ENCODE measurements at regions of chr4 and their contacts with region 1.

Region 1: DNA sequence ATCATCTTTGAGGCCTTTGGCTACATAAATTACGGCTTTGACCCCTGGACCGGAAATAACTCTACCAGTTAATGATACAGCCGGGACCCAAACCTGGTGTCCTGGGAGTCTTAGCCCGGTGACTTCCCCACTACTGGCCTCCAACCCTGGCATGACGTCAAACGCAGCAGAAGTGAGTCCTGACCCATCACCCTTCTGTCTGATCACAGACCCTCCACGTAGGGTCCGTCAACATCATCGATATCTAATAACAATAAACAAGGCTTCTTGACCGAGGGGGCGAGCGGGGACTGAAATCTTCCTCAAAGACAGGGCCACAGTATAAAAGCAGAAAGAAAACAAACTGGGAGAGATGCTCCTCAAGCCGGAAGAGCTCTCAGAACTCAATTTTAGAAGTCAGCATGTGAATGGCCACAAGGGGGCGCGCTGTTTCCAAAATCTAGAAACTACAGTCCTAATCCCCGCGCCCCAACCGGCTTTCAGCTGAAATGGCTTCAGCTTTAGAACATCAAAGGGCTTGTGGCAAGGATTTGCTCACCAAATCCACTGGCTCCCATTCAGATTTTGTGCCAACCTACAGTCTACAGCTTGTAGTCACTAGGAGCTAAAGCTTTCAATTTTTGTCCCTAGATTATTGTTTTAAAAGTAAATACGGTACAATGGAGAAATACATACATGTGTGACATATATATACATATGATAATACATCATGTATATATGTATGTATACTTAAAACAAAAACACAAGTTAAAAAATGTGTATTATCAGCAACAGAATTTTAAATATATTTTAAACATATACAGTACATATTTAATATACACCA is 46.4 kb upstream of the ENPP6 start:
- DNase-seq: peak; percentile 85
- H3K4me3 ChIP-seq: no peak overlapping the region
- H3K27ac ChIP-seq: no peak overlapping the region
- H3K4me1 ChIP-seq: peaks cover 23% of the 10 kb centered on the region
- H3K27me3 ChIP-seq: peaks cover 2 to 3% of the 10 kb centered on the region in 2 experiments
- CTCF ChIP-seq: peak; percentile 77 to 85
- POLR2A ChIP-seq: no peak

Region 2: DNA sequence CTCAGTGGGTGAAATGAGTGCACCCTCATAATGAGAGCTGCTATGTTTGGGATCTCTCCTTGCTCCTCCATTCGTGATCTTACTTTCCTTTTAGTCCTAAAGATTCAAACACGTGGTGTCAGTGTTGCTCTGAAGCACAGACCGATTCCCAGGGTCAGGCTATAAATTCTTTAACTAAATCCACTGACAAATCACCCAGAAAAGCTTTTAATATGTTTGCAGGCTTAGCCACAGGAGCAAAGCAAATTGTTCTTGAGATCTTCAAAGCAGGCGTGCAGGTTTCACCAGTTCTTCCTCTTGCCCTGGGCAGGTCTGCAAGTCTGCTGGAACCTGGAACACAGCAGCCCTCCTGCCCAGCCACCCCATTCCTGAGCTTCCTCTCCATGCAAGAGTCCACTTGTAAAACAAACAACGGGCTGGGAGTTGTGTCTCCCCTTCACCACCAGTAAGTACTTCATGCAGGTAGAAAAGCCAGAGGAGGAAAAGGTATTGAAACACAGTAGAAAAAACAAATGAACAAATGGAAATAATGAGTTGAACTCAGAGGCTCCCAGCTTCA is 23.7 kb after region 1 on chr4:
- CTCF ChIA-PET with region 1: interaction called, 33 read pairs
- POLR2A ChIA-PET with region 1: no interaction called
- dilution Hi-C with region 1: no loop called
- intact Hi-C with region 1: no loop called
- DNase-seq: peak; percentile 55
- H3K4me3 ChIP-seq: no peak overlapping the region
- H3K27ac ChIP-seq: no peak overlapping the region
- H3K4me1 ChIP-seq: no peaks in the 10 kb centered on the region
- H3K27me3 ChIP-seq: no peaks in the 10 kb centered on the region
- CTCF ChIP-seq: no peak
- POLR2A ChIP-seq: no peak

Region 3: GRCh38 chr4:184408021-184408710 is 144.0 kb after region 1 on chr4:
- CTCF ChIA-PET with region 1: interaction called, 11 read pairs
- POLR2A ChIA-PET with region 1: interaction called, 3 read pairs
- dilution Hi-C with region 1: no loop called
- intact Hi-C with region 1: loop called (anchors 2 kb)
- DNase-seq: peak; percentile 21
- H3K4me3 ChIP-seq: no peak overlapping the region
- H3K27ac ChIP-seq: peak overlapping the region; percentile 6
- H3K4me1 ChIP-seq: peaks cover 25% of the 10 kb centered on the region
- H3K27me3 ChIP-seq: no peaks in the 10 kb centered on the region
- CTCF ChIP-seq: no peak
- POLR2A ChIP-seq: no peak

Region 4: DNA sequence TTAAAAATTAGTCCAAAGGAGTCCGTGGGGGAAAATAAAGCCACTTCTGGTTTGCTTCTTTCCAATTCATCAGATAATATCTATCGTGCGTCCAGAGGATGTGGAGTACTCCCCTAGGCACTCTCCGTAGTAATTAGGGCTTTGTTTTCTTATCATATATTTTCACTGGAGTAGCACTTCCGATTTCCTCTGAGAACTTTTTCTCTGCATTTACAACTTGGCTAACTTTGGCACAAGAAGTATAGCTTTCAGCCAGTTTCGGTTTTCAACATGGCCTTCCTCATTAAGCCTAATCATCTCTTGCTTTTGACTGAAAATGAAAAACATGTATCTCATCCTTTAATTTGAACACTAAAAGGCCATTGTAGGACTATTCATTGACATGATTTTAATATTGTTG is 304.6 kb after region 1 on chr4:
- CTCF ChIA-PET with region 1: interaction called, 10 read pairs
- POLR2A ChIA-PET with region 1: no interaction called
- dilution Hi-C with region 1: no loop called
- intact Hi-C with region 1: no loop called
- DNase-seq: peak; percentile 84
- H3K4me3 ChIP-seq: peak overlapping the region in 1 of 3 experiments; percentile 32
- H3K27ac ChIP-seq: peak overlapping the region; percentile 51
- H3K4me1 ChIP-seq: peaks cover 28% of the 10 kb centered on the region
- H3K27me3 ChIP-seq: no peaks in the 10 kb centered on the region
- CTCF ChIP-seq: no peak
- POLR2A ChIP-seq: no peak

Region 5: GRCh38 chr4:184688447-184688846 is 424.3 kb after region 1 on chr4:
- CTCF ChIA-PET with region 1: interaction called, 6 read pairs
- POLR2A ChIA-PET with region 1: no interaction called
- dilution Hi-C with region 1: no loop called
- intact Hi-C with region 1: loop called (anchors 1 kb)
- DNase-seq: peak; percentile 93
- H3K4me3 ChIP-seq: no peak overlapping the region
- H3K27ac ChIP-seq: peak overlapping the region; percentile 77
- H3K4me1 ChIP-seq: peaks cover 18% of the 10 kb centered on the region
- H3K27me3 ChIP-seq: no peaks in the 10 kb centered on the region
- CTCF ChIP-seq: no peak
- POLR2A ChIP-seq: peak; percentile 54

Region 6: DNA sequence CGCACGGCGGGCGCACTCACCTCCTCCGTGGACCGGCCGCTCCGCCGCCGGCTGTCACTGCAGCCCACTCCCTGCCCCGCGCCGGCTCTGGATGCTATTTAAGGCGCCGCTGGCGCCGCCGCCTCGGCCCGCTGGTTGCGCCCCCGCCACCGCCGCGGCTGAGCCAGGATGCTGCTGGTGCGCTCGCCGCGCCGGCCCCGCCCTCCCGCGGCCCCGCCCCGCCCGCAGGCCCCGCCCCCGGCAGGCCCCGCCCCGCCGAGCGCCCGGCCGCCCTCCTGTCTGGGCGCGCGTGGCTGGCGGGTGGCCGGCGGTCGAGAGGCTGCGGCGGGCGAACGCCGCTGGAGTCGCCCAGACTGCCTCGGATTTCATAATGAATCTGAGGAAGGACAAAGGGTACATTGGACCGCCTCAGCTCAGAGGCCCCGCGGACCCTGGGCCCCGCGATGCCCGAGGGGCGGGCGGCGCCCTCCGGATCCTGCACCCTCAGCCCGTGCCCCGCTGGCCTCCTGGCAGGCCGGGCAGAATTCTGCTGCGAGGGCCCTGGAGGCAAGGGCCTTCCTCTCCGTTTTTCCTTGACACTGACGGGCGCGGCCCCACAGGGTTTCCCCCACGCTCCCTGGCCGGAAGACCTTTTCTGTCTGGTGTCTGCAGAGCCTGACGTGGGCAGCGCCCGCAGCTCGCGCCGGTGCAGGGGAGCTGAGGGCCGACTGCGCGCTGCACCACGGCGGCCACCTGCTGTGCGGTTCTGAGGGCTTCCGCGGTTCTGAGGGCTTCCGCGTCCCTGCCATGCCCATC is 562.0 kb after region 1 on chr4 and contains the start of gene ACSL1:
- CTCF ChIA-PET with region 1: no interaction called
- POLR2A ChIA-PET with region 1: no interaction called
- dilution Hi-C with region 1: no loop called
- intact Hi-C with region 1: loop called (anchors 1 kb)
- DNase-seq: peak; percentile 48
- H3K4me3 ChIP-seq: peak within 1 kb of the TSS; percentile 43 to 62 (median 51)
- H3K27ac ChIP-seq: peak within 1 kb of the TSS; percentile 40
- H3K4me1 ChIP-seq: peaks cover 13% of the 10 kb centered on the region
- H3K27me3 ChIP-seq: peaks cover 0 to 2% of the 10 kb centered on the region in 2 experiments
- CTCF ChIP-seq: no peak
- POLR2A ChIP-seq: no peak
- total RNA-seq, gene ACSL1: 17.7 and 18.9 TPM in 2 replicates

Region 7: DNA sequence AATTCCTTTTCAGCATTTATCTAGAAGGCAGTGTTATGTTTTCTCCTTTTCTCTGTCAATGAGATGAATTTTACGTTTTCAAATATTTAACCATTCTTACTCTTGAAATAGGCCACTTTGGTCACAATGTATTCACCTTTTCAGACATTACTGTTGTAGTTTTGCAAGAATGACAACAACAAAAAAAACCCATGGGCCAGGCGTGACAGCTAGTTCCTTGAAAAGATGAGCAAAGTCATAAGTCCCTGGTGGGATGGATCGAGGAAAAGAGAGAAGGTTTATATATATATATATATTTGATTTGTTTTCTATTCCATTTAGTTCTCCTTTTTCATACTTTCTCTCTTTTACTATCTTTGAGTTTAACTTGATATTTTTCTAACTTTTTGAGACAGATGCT is 599.8 kb after region 1 on chr4:
- CTCF ChIA-PET with region 1: no interaction called
- POLR2A ChIA-PET with region 1: no interaction called
- dilution Hi-C with region 1: no loop called
- intact Hi-C with region 1: no loop called
- DNase-seq: no peak
- H3K4me3 ChIP-seq: no peak overlapping the region
- H3K27ac ChIP-seq: no peak overlapping the region
- H3K4me1 ChIP-seq: no peaks in the 10 kb centered on the region
- H3K27me3 ChIP-seq: no peaks in the 10 kb centered on the region
- CTCF ChIP-seq: no peak
- POLR2A ChIP-seq: no peak

Measured in endothelial cell of umbilical vein (primary cell).